Activated T-helper 1 cell treated with anti-CD3 and anti-CD28 coated beads, Interleukin-12 subunit alpha, Interleukin-12 subunit beta, Interleukin-2, Interleukin-4 antibody, amounts not matched to agents 30 ng/mL and 10 ng/mL and 1 ng/mL, durations not matched to agents 14 hours and 24 hours and 36 hours (primary cell): ENCODE measurements at regions of chr1 and their contacts with region 1.

Region 1: DNA sequence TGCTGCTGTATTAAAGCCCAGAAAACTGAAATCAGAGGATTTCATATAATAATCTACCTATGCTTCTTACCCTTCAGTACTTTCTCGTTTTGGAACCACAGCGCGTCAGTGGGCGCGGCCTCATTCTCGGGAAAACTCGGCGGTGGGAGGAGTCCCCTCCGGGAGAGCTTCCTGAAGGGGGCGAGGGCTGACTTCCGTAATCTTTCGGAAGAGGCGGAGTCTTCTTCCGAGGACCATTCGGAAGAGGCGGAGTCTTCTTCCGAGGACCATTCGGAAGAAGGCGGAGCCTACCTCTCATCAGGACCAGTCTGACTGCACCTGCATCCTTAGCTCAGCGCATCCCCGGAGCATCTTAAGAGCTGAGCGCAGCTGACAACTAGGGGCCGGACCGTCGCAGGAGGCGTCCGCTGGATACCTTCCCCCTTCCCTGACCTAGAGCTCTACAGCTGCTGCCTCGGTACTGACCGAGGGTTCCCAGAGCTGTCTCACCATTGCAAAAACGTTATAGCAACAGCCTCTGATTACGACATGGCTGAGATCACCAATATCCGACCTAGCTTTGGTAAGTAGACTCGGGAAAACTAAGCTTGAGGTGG is at the start of gene SYT11:
- DNase-seq: peak; percentile 90
- H3K4me3 Mint-ChIP-seq: peak within 1 kb of the TSS; percentile 89
- H3K27ac Mint-ChIP-seq: peak within 1 kb of the TSS; percentile 98
- H3K4me1 Mint-ChIP-seq: peaks cover 47% of the 10 kb centered on the region
- H3K27me3 Mint-ChIP-seq: no peaks in the 10 kb centered on the region
- total RNA-seq, gene SYT11: 25.7 and 26.8 TPM in 2 replicates

Region 2: DNA sequence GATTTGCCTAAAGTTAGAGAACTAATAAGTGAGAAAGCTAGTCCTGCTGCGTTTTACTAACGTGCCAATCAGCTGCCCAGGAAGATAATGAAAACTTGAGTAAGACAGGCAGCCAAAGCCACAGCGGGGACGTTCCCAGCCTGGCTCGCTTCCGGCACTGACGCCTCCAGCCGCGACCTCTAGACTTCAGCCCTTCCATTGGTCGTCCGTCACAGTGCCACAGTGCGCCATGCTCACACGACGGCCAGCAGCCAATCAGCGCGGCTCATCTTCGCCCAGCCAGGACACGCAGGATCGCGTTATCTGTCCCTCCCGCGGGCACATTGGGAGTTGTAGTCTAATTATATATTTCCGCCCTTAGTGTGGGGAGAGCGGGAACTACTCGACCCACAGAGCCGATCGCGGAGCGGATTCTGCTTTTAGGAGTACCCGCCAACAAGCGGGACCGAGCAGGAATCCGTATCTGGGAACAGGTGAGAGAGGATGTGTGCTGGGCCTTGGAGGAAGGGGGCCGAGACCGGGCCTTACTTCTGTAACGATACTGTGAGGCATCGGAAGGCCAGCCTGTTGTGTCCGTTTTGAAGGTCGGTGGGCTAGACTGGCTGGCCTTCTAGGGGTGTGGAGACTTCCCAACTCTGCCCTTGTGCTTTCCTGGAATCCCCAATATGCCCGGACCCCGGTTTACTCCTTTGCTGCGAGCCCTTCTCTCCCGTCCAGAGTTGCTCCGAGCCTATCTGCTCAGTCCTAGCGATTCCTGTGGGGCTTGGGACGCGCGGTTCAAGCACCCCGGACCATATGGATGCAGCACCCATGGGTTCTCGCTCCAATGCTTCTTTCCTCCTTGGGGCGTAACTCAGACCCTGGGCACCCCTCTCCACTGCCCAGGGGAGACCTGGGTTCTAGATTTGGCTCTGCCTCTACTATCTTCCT is 550.6 kb before region 1 on chr1 and contains the start of gene FDPS:
- intact Hi-C with region 1: loop called (anchors 1 kb)
- DNase-seq: peak; percentile 98
- H3K4me3 Mint-ChIP-seq: peak within 1 kb of the TSS; percentile 92
- H3K27ac Mint-ChIP-seq: peak within 1 kb of the TSS; percentile 93
- H3K4me1 Mint-ChIP-seq: peaks cover 38% of the 10 kb centered on the region
- H3K27me3 Mint-ChIP-seq: no peaks in the 10 kb centered on the region
- total RNA-seq, gene FDPS: 274 and 289 TPM in 2 replicates

Region 3: DNA sequence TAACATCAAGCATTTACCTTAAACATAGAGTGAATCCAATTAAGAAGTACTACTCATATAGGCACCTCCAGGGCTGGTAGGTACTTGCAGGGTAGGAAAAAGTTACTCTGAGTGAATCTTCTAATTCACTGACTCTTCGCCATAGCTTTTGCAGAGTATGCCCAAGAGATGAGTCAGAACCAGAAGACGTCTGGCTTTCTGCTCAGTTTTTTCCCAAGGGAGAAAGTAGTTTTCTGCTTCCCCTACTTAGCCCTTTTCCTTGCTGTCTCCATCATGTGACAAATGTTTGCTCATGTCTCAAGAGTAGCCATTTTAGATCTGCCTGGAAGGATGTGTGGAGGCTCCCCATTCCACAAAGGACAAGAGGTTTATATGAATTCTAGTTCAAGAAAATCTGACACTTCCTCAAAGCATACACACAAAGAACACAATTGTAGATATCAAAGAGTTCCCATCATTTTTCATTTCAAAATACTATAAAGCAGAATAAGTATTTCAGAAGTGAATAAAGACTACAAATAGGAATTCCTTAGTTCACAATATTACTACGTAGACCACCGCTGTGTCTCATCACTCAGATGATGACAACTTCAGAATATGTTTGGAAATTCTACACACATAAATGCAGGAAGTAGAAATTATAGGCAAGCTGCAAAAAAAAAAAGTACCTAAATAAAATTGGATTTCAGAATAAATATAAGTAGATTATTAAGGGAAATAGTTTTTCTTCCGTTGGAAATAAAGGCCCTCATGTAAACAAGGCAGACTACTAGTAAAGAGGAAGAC is 395.3 kb before region 1 on chr1:
- intact Hi-C with region 1: no loop called
- DNase-seq: no peak
- H3K4me3 Mint-ChIP-seq: no peak overlapping the region
- H3K27ac Mint-ChIP-seq: no peak overlapping the region
- H3K4me1 Mint-ChIP-seq: peaks cover 60% of the 10 kb centered on the region
- H3K27me3 Mint-ChIP-seq: no peaks in the 10 kb centered on the region

Region 4: DNA sequence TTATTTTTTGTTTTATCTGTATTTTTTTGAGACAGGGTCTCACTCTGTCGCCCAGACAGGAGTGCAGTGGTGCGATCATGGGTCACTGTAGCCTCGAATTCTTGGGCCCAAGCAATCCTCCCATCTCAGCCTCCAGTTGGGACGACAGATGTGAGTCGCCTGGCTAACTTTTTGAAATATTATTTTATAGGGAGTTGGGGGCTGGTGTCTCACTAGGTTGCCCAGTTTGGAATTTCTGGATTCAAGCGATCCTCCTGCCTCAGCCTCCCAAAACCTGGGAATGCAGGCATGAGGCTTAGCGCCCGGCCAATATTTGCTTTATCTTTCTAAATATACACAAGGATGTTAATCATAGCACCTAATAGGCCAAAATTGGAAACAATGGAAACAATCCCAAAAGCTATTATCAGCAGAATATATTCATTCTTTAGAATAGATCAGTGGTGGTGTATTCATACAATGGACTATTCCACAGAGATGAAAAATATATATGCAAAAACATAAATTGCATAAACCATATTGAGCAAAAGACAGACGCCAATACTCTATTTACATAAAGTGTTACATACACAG is 114.5 kb before region 1 on chr1:
- intact Hi-C with region 1: loop called (anchors 2 kb)
- DNase-seq: no peak
- H3K4me3 Mint-ChIP-seq: peak overlapping the region; percentile 99
- H3K27ac Mint-ChIP-seq: peak overlapping the region; percentile 95
- H3K4me1 Mint-ChIP-seq: peaks cover 12% of the 10 kb centered on the region
- H3K27me3 Mint-ChIP-seq: no peaks in the 10 kb centered on the region

Region 5: DNA sequence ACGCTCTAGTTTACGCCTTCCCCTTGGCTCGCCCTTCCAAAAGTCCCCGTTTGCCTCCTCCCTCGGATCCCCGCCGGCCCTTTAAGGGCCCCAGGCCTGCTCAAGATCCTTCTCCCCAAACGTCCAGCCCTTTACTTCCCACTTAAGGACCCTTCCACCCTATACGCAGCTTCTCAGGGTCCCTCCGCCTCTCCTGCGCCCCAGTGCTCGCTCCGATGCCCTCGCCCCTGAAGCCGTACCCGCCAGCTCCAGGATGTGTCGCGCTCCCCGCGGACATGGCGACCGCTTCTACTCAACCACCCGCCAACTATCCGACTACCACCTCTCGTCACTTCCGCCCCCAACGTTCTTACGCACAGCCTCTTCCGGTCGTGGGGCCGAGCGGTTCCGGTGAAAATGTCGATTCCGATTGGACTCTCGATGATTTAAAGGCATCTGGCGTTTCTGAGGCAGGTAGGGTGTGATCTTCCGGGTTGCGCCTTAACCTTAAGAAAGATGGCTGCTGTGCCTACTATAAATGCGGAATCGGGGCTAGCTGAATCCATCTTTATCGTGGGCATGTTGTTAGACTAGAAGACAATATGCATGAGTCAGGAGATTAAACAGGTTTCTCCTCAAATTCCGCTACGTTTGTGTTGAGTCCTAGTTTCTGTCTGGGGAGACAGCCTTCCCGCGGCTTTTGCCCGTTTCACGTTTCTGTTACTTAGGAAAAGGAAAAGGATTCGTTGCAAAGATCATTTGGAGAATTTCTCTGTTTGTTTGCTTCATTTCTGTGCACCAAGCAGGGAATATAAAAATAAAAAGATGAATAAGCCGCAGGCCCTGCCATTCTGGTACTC is 75.0 kb after region 1 on chr1 and contains the start of gene KHDC4:
- intact Hi-C with region 1: loop called (anchors 1 kb)
- DNase-seq: peak; percentile 94
- H3K4me3 Mint-ChIP-seq: no peak within 1 kb of the TSS
- H3K27ac Mint-ChIP-seq: peak within 1 kb of the TSS; percentile 61
- H3K4me1 Mint-ChIP-seq: peaks cover 39% of the 10 kb centered on the region
- H3K27me3 Mint-ChIP-seq: no peaks in the 10 kb centered on the region
- total RNA-seq, gene KHDC4: 80.1 and 81.8 TPM in 2 replicates

Region 6: DNA sequence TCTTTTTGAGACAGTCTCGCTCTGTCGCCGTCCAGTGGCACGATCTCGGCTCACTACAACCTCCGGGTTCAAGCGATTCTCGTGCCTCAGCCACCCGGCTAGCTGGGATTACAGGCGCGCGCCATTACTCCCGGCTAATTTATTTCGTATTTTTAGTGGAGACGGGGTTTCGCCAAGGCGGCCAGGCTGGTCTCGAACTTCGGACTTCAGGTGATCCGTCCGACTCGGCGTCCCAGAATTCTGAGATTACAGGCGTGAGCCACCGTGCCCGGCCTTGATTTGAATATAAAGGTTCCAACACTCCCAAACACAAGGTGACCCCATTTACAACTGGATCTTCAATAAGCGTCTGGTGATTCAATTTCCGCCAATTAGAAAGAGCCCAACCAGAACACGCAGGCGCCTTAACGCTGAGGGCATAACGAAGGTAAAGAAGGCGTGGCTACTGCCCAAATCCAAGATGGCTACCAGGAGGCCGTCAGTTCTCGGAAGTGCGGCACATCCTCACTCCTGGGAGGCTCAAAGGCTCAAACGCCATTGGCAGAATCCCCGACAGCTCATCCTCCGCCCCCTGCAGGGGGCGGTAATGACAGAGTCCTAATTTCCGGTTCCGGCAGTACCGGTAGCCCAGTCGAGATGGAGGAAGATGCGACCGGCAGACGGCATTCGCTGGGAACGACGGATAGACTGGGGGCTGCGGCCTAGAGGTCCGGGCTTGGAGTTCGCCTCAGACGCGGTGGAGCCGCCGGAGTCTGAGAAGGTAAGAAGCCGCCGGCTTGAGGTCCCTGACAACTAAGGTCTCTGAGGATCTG is 334.4 kb after region 1 on chr1 and contains the start of gene SLC25A44:
- intact Hi-C with region 1: loop called (anchors 10 kb)
- DNase-seq: peak; percentile 97
- H3K4me3 Mint-ChIP-seq: peak within 1 kb of the TSS; percentile 94
- H3K27ac Mint-ChIP-seq: peak within 1 kb of the TSS; percentile 87
- H3K4me1 Mint-ChIP-seq: peaks cover 54% of the 10 kb centered on the region
- H3K27me3 Mint-ChIP-seq: no peaks in the 10 kb centered on the region
- total RNA-seq, gene SLC25A44: 67.6 and 79.3 TPM in 2 replicates

Region 7: GRCh38 chr1:156740679-156741612 is 881.6 kb after region 1 on chr1 and contains the start of gene MRPL24:
- intact Hi-C with region 1: loop called (anchors 5 kb)
- DNase-seq: peak; percentile 97
- H3K4me3 Mint-ChIP-seq: peak within 1 kb of the TSS; percentile 93
- H3K27ac Mint-ChIP-seq: peak within 1 kb of the TSS; percentile 94
- H3K4me1 Mint-ChIP-seq: peaks cover 54% of the 10 kb centered on the region
- H3K27me3 Mint-ChIP-seq: no peaks in the 10 kb centered on the region
- total RNA-seq, gene MRPL24: 132 and 135 TPM in 2 replicates